MCF 10A (cell line): ENCODE measurements at regions of chr6 and their contacts with region 1.

Region 1: GRCh38 chr6:13859871-13860555 is 45.7 kb upstream of the MCUR1 start:
- DNase-seq: no peak
- H3K4me3 Mint-ChIP-seq: no peak overlapping the region
- H3K27ac Mint-ChIP-seq: no peak overlapping the region
- H3K4me1 Mint-ChIP-seq: no peaks in the 10 kb centered on the region
- H3K27me3 Mint-ChIP-seq: peaks cover 5% of the 10 kb centered on the region
- CTCF ChIP-seq: no peak

Region 2: DNA sequence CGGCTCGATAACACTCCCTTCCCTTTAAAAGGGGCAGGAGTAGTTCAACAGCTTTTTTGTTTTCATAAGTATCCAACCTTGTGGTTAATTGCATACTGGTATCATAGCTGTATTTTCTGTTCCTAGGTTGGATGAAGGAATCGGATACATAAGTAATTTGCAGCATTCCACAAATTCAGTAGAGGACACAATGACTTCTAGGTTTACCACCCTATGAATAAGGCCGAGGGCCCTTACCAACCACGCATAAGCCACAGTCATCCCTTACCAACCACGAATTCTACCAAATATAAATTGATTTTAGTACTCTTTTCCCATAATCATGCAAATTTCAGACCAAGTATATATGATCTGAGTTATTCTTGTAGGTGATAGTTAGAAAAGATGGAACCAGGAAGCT is 82.0 kb before region 1 on chr6:
- CTCF ChIA-PET with region 1: no interaction called
- POLR2A ChIA-PET with region 1: no interaction called
- intact Hi-C with region 1: no loop called
- DNase-seq: no peak
- H3K4me3 Mint-ChIP-seq: no peak overlapping the region
- H3K27ac Mint-ChIP-seq: no peak overlapping the region
- H3K4me1 Mint-ChIP-seq: no peaks in the 10 kb centered on the region
- H3K27me3 Mint-ChIP-seq: no peaks in the 10 kb centered on the region
- CTCF ChIP-seq: no peak

Region 3: GRCh38 chr6:13873285-13874190 is 13.5 kb after region 1 on chr6:
- CTCF ChIA-PET with region 1: interaction called, 11 read pairs
- POLR2A ChIA-PET with region 1: interaction called, 4 read pairs
- intact Hi-C with region 1: no loop called
- DNase-seq: peak; percentile 64
- H3K4me3 Mint-ChIP-seq: peak overlapping the region; percentile 80
- H3K27ac Mint-ChIP-seq: peak overlapping the region; percentile 77
- H3K4me1 Mint-ChIP-seq: peaks cover 12% of the 10 kb centered on the region
- H3K27me3 Mint-ChIP-seq: no peaks in the 10 kb centered on the region
- CTCF ChIP-seq: peak; percentile 88